ENCODE measurements at regions of chr1 and their contacts with region 1.

Region 1: DNA sequence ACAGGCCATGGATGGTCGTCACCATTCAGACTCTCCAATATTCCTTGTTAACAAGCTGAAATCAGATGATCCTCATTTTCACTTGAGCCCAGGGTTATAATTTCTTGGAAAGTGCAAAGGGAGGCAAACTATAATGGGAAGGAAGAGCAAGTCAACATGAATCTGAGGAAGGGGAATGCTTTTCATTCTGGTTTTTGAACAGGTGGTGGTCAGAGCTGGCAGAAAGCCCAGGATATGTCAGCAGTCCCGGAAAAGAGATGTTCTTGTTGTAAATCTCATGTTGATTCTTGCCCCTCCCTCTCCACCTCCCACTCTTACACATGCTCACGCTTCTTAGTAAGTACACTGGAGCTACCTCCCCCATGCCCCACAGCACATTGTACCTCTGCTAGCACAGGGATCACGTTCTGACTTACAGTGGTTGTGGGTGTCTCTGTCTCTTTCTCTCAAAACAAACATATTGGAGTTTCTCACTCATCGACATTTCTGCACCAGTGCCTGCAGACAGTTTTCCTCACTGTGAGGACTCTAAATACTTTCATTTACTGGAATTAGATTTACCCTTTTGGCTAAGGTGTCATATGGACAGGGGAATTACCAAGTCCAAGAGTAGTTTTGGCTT is 77.6 kb downstream of the XCL2 start:
- DNase-seq: peak; percentile 80
- H3K4me3 Mint-ChIP-seq: no peak overlapping the region
- H3K27ac Mint-ChIP-seq: peak overlapping the region; percentile 3
- H3K4me1 Mint-ChIP-seq: peaks cover 47% of the 10 kb centered on the region
- H3K27me3 Mint-ChIP-seq: no peaks in the 10 kb centered on the region
- CTCF ChIP-seq: no peak

Region 2: DNA sequence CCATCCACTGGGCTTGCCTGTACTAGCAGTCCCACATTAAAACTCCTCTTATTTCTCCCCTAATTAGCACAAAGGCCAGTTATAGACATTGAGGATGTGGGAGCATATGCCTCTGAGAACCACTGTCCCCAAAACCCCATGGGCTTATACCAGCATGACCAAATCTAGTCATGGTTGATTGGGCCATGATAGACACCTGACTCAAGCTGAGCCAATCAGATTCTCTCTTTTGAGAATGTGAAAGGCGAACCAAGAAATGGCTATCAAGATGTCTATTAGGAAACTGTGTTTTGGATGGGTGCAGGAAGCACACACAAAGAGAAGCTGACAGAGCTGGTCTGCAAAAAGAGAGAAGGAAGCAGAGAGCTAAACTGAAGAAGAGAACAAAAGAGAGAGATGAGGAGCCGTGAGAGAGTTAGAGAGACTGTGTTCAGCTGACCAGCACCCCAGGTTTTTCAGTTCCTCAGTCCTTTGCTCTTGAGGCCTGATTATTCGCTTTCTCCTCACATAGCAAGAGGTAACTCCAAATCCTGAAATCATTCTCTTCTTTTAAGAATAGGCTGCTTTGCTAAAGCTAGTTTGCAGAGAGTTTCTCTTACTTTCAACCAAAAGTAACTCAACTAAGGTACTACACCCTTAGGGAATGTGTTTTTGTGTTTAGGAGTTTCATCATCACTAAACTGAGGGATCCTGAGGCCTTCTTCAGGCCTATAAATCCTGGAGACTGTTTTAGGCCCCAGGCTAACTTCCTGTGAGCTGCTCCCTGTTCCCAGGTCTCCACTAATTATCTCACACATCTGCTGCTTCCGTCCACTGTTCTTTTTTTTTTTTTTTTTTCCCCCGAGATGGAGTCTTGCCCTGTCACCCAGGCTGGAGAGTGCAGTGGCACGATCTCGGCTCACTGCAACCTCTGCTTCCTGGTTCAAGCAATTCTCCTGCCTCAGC is 295.4 kb before region 1 on chr1:
- CTCF ChIA-PET with region 1: no interaction called
- POLR2A ChIA-PET with region 1: no interaction called
- intact Hi-C with region 1: no loop called
- DNase-seq: no peak
- H3K4me3 Mint-ChIP-seq: no peak overlapping the region
- H3K27ac Mint-ChIP-seq: no peak overlapping the region
- H3K4me1 Mint-ChIP-seq: no peaks in the 10 kb centered on the region
- H3K27me3 Mint-ChIP-seq: no peaks in the 10 kb centered on the region
- CTCF ChIP-seq: no peak

Region 3: DNA sequence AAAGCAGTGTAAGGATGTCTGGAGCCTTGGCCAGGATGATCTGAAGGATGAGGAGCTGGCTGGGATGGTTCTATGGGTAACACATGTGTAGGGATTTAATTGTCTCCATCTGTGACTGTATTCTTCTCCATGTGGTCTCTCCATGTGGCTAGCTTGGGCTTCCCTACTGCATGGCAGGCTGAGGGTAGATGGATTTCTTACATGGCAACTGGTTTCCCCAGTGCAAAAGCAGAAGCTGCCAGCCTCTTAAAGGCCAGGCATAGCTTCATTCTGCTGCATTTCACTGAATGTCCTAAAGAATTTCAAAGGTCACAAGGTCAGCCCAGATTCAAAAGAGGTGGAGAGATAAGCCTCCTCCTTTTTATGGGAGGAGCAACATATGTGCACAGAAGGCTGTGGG is 15.9 kb after region 1 on chr1:
- CTCF ChIA-PET with region 1: interaction called, 12 read pairs
- POLR2A ChIA-PET with region 1: interaction called, 4 read pairs
- intact Hi-C with region 1: no loop called
- DNase-seq: no peak
- H3K4me3 Mint-ChIP-seq: no peak overlapping the region
- H3K27ac Mint-ChIP-seq: no peak overlapping the region
- H3K4me1 Mint-ChIP-seq: peaks cover 17% of the 10 kb centered on the region
- H3K27me3 Mint-ChIP-seq: no peaks in the 10 kb centered on the region
- CTCF ChIP-seq: no peak

Region 4: DNA sequence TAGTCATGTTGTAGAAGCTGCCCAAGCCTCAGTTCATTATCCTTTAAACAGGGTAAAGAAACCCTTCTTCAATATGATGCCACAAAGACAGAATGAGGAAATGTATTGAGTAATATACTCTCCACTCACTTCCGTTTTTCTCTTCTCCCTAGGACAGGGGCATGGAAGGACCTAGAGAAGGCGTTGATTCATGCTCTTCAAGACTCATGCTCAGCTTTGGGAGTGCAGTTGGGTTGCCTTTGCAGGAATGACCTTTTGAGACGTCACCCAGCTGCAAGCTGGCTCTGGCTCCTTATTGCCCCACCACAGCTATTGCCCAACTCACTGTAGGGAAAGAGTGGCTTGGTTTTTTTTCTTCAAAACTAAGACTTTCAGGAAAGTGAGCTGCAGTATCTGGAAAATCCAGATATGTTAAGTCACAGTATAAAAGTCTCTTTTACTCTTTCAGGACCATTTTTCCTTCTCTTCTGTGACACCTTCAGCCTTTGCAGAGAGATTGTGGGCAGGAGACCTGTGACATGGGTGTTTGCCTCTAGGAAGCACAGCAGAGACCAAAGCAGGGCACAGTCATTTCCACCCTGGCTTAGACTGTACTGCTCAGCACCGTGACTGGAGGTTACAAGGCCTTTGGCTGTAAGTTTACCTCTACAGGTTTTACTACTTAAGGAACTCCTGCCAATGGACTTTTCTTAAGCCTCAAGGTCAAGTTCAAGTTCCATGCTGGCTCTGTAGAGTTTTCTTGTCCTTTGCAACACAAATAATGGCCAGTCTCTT is 38.0 kb after region 1 on chr1:
- CTCF ChIA-PET with region 1: interaction called, 3 read pairs
- POLR2A ChIA-PET with region 1: no interaction called
- intact Hi-C with region 1: loop called (anchors 5 kb)
- DNase-seq: peak; percentile 97
- H3K4me3 Mint-ChIP-seq: no peak overlapping the region
- H3K27ac Mint-ChIP-seq: no peak overlapping the region
- H3K4me1 Mint-ChIP-seq: peaks cover 40% of the 10 kb centered on the region
- H3K27me3 Mint-ChIP-seq: no peaks in the 10 kb centered on the region
- CTCF ChIP-seq: no peak

Measured in MCF 10A (cell line).